GM12878 (cell line): ENCODE measurements at regions of chr13 and their contacts with region 1.

Region 1: DNA sequence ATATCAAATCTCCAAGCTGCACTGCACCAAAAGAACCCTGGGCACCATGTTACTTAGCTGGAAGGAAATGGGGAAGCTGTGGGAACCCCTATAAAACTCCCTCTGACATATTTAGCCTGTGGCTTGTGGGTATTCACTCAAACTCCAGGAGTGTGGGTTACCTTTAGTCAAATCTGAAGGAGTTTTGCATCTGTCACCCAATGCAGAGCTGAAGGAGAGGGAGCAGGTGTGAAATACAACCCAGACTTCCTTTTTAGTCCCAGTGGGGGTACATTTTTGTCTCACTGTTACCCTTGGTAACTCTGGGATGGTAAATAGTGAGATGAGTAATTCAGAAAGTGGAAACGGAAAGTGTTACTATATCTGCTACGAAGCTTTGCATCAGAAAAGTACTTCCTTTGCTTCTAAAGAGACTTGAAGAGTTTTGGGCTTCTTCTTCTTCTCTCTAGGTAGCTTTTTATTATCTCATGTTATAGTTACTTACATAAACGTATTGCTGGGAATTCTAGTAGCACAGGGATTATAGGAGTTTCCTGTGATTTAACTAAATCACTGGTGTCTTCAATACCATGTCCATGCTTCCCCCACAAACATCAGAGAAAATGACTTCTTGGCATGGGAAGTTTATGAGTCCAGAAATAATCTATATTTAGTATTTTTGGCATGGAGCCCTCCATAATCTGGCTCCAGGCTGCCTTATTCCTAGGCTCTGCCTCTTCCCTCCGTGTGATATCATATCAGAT is 105.9 kb downstream of the AKAP11 start:
- DNase-seq: peak; percentile 100
- ATAC-seq: peak; percentile 76
- H3K4me3 ChIP-seq: peak overlapping the region; percentile 18; the same call in 1 of the 2 replicates
- H3K27ac ChIP-seq: peak overlapping the region; percentile 99
- H3K4me1 ChIP-seq: peaks cover 53% of the 10 kb centered on the region
- H3K27me3 ChIP-seq: no peaks in the 10 kb centered on the region
- CTCF ChIP-seq: no peak
- EP300 ChIP-seq: peak; percentile 99 to 100
- POLR2A ChIP-seq: no peak
- RAD21 ChIP-seq: no peak; the same call in 1 of the 2 replicates

Region 2: GRCh38 chr13:41085961-41086585 is 1291.7 kb before region 1 on chr13:
- CTCF ChIA-PET with region 1: no interaction called
- POLR2A ChIA-PET with region 1: no interaction called
- RAD21 ChIA-PET with region 1: no interaction called
- SMC1A ChIA-PET with region 1: no interaction called
- in situ Hi-C with region 1: no loop called
- intact Hi-C with region 1: no loop called
- DNase-seq: no peak
- ATAC-seq: no peak
- H3K4me3 ChIP-seq: no peak overlapping the region
- H3K27ac ChIP-seq: no peak overlapping the region
- H3K4me1 ChIP-seq: no peaks in the 10 kb centered on the region
- H3K27me3 ChIP-seq: no peaks in the 10 kb centered on the region
- CTCF ChIP-seq: no peak
- EP300 ChIP-seq: no peak
- POLR2A ChIP-seq: no peak
- RAD21 ChIP-seq: no peak

Region 3: GRCh38 chr13:41622432-41623429 is 755.1 kb before region 1 on chr13:
- CTCF ChIA-PET with region 1: no interaction called
- POLR2A ChIA-PET with region 1: no interaction called
- RAD21 ChIA-PET with region 1: no interaction called
- SMC1A ChIA-PET with region 1: no interaction called
- in situ Hi-C with region 1: no loop called
- intact Hi-C with region 1: no loop called
- DNase-seq: no peak
- ATAC-seq: no peak
- H3K4me3 ChIP-seq: no peak overlapping the region
- H3K27ac ChIP-seq: no peak overlapping the region
- H3K4me1 ChIP-seq: no peaks in the 10 kb centered on the region
- H3K27me3 ChIP-seq: no peaks in the 10 kb centered on the region
- CTCF ChIP-seq: no peak
- EP300 ChIP-seq: no peak
- POLR2A ChIP-seq: no peak
- RAD21 ChIP-seq: no peak

Region 4: DNA sequence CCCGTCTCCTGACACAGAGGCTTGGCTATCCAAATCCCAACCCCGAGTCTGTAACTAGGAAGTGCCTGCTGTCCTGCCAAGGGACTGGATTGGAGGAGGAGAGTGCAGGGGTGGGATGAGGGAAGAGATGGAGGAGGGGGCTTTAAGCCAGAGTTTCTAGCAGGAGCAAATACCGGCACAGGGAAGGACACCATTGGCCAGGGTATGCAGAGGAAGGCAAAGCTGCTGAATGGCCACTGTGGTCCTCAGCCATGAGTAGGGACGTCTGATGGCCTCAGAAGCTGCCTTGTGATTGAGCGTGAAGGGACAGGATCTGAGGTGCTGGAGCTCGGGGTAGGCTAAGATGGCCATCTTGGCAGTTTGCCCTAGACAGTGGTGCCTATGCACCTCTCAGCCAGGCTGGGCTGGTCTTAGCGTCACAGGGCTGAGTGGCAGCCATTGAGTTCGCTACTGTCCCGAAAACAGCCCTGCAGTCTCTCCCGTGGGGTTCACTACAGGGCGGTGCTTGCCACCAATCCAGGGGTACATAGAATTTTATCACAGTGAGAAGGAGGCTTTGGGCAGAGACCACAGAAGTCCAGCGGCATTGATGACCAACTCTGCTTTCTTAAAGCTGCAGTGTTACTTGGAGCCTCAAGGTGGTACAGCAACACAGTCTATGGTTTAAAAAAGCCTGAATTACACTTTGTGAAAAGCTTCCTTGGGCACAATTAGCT is 44.0 kb before region 1 on chr13:
- CTCF ChIA-PET with region 1: interaction called, 10 read pairs
- POLR2A ChIA-PET with region 1: interaction called, 3 read pairs
- RAD21 ChIA-PET with region 1: interaction called, 10 read pairs
- SMC1A ChIA-PET with region 1: interaction called, 7 read pairs
- in situ Hi-C with region 1: no loop called
- intact Hi-C with region 1: no loop called
- DNase-seq: no peak
- ATAC-seq: peak; percentile 92
- H3K4me3 ChIP-seq: no peak overlapping the region
- H3K27ac ChIP-seq: peak overlapping the region; percentile 73
- H3K4me1 ChIP-seq: peaks cover 18% of the 10 kb centered on the region
- H3K27me3 ChIP-seq: no peaks in the 10 kb centered on the region
- CTCF ChIP-seq: peak; percentile 74 to 87 (median 83); a peak in 5 of 6 replicates
- EP300 ChIP-seq: no peak
- POLR2A ChIP-seq: no peak
- RAD21 ChIP-seq: peak; percentile 98

Region 5: DNA sequence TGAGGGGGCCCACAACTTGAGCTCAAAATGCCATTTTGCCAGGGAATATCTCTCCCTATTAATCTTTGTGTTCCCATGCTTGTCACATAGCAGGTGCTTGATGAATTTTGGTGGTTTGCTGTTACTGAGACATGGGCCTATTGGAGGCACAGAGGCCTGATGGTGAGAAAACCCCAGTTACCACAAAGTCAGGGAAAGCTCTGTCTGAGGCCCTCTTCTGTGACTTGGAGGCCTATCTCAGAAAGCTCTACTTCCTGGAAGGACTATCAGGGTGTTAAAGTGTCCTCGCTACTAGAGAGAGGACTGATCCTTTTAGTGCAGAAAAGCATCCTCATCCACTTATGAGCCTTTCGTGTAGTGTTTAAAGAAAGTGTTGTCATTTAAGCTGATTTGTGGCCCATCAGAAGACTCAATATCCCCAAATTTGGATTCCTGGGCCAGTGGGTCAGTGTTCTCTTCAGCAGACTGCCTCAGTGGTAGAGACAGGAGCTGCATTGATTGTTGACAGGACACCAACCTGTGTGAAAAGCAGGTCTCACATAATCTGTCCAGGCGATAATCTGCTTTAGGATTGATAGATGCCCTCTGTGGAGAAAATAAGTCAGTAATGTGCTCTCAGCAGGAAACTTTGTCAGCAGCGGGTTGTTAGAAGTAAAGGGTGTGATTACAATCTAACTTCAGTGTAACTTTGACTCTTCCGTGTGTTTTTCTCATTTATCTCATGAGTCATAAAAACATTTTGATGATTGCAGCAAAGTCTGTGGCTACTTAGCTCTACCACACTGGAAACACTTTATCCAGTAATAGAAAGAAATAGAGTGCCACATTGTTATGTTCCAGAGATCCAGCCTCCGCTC is 15.1 kb after region 1 on chr13:
- CTCF ChIA-PET with region 1: interaction called, 17 read pairs
- POLR2A ChIA-PET with region 1: interaction called, 35 read pairs
- RAD21 ChIA-PET with region 1: interaction called, 26 read pairs
- SMC1A ChIA-PET with region 1: interaction called, 177 read pairs
- in situ Hi-C with region 1: no loop called
- intact Hi-C with region 1: no loop called
- DNase-seq: no peak
- ATAC-seq: peak; percentile 33; the same call in 2 of the 3 replicates
- H3K4me3 ChIP-seq: no peak overlapping the region
- H3K27ac ChIP-seq: peak overlapping the region; percentile 85
- H3K4me1 ChIP-seq: peaks cover 56% of the 10 kb centered on the region
- H3K27me3 ChIP-seq: no peaks in the 10 kb centered on the region
- CTCF ChIP-seq: no peak
- EP300 ChIP-seq: no peak
- POLR2A ChIP-seq: no peak
- RAD21 ChIP-seq: peak; percentile 18; the same call in 1 of the 2 replicates

Region 6: DNA sequence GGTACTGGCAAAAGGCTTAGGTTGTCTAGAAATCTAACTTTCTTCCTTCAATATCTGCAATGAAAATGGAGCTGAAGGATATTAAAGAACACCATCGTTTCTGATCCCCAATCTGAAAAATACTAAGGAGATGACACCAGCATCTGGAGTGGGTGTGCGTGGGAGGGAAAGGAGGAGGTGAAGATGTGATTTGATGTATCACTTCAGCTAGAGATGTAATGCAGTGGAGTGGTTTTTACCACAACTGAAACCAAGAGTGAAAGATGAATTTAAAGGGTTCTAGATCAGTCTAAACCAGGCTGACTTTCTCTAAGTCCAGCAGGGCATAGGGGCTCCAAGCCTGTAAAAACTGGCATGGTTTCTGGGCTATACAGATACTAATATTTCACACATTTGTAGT is 42.5 kb after region 1 on chr13:
- CTCF ChIA-PET with region 1: no interaction called
- POLR2A ChIA-PET with region 1: interaction called, 3 read pairs
- RAD21 ChIA-PET with region 1: interaction called, 76 read pairs
- SMC1A ChIA-PET with region 1: interaction called, 210 read pairs
- in situ Hi-C with region 1: no loop called
- intact Hi-C with region 1: no loop called
- DNase-seq: peak; percentile 68
- ATAC-seq: peak; percentile 95
- H3K4me3 ChIP-seq: no peak overlapping the region
- H3K27ac ChIP-seq: peak overlapping the region; percentile 50; the same call in 1 of the 2 replicates
- H3K4me1 ChIP-seq: peaks cover 32% of the 10 kb centered on the region
- H3K27me3 ChIP-seq: no peaks in the 10 kb centered on the region
- CTCF ChIP-seq: no peak
- EP300 ChIP-seq: peak in 1 of 2 experiments; percentile 64; a peak in 1 of 4 replicates
- POLR2A ChIP-seq: no peak
- RAD21 ChIP-seq: no peak; the same call in 1 of the 2 replicates

Region 7: GRCh38 chr13:42497798-42498197 is 120.0 kb after region 1 on chr13:
- CTCF ChIA-PET with region 1: interaction called, 4 read pairs
- POLR2A ChIA-PET with region 1: no interaction called
- RAD21 ChIA-PET with region 1: no interaction called
- SMC1A ChIA-PET with region 1: interaction called, 5 read pairs
- in situ Hi-C with region 1: no loop called
- intact Hi-C with region 1: loop called (anchors 2 kb)
- DNase-seq: peak; percentile 88
- ATAC-seq: peak; percentile 90
- H3K4me3 ChIP-seq: no peak overlapping the region
- H3K27ac ChIP-seq: peak overlapping the region; percentile 85
- H3K4me1 ChIP-seq: peaks cover 33% of the 10 kb centered on the region
- H3K27me3 ChIP-seq: no peaks in the 10 kb centered on the region
- CTCF ChIP-seq: no peak
- EP300 ChIP-seq: peak in 1 of 2 experiments; percentile 69; a peak in 1 of 4 replicates
- POLR2A ChIP-seq: no peak
- RAD21 ChIP-seq: peak; percentile 36; the same call in 1 of the 2 replicates

Region 8: GRCh38 chr13:42991892-42992763 is 614.3 kb after region 1 on chr13 and contains the start of gene EPSTI1:
- CTCF ChIA-PET with region 1: no interaction called
- POLR2A ChIA-PET with region 1: no interaction called
- RAD21 ChIA-PET with region 1: interaction called, 3 read pairs
- SMC1A ChIA-PET with region 1: no interaction called
- in situ Hi-C with region 1: no loop called
- intact Hi-C with region 1: loop called (anchors 5 kb)
- DNase-seq: no peak
- ATAC-seq: peak; percentile 82
- H3K4me3 ChIP-seq: peak within 1 kb of the TSS; percentile 86
- H3K27ac ChIP-seq: peak within 1 kb of the TSS; percentile 99
- H3K4me1 ChIP-seq: peaks cover 28% of the 10 kb centered on the region
- H3K27me3 ChIP-seq: no peaks in the 10 kb centered on the region
- CTCF ChIP-seq: no peak
- EP300 ChIP-seq: peak in 1 of 2 experiments; percentile 67; a peak in 1 of 4 replicates
- POLR2A ChIP-seq: peak; percentile 85
- RAD21 ChIP-seq: no peak
- polyA plus RNA-seq, gene EPSTI1: 4.7 to 8.9 TPM